Activated naive CD8-positive, alpha-beta T cell treated with anti-CD3 and anti-CD28 coated beads, Interleukin-2, amount 10 ng/mL, durations not matched to agents 7 days and 5 days (primary cell): ENCODE measurements at regions of chr12 and their contacts with region 1.

Region 1: GRCh38 chr12:7959701-7960121 is 23.7 kb upstream of the SLC2A3 start:
- DNase-seq: peak; percentile 56
- ATAC-seq: peak; percentile 65
- H3K4me3 Mint-ChIP-seq: peak overlapping the region; percentile 97
- H3K27ac Mint-ChIP-seq: peak overlapping the region; percentile 94
- H3K4me1 Mint-ChIP-seq: peaks cover 41% of the 10 kb centered on the region
- H3K27me3 Mint-ChIP-seq: no peaks in the 10 kb centered on the region

Region 2: DNA sequence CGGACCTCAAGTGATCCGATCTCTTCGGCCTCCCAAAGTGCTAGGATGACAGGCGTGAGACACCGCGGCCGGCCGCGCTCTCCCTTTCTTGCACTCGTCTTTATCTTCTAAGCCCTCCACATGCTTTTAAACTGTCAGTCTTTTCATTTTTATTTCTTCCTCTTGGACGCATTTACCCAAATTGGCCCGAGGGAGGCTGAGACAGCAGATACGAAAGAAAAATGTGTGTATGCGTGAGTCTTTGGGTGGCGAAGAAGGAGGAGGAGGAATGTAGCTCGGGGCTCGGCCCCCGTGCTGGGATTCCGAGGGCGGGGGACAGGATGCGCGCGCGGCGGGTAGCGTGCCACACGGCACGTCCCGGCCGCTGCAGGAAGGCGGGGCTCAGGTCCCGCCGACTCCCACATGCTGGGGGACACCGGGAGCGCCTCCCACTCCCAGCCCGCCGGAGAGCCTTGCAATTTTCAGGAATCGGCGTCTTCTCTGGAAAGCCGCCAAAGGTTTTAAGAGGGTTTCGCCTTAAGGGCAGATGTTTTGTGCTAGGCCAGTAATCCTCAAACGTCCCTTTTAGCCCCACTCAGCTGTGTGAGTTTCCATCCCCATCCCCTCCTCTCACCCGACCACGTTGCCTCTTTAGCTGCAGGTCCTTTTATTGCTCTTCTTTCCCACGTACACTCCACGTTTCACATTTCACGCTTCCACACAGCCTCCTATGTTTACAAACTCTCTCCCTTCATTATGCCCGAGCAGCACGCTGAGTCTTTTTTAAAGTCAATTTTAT is 11.0 kb after region 1 on chr12:
- POLR2A ChIA-PET with region 1: interaction called, 61 read pairs
- DNase-seq: peak; percentile 89
- ATAC-seq: peak; percentile 93
- H3K4me3 Mint-ChIP-seq: peak overlapping the region; percentile 79
- H3K27ac Mint-ChIP-seq: peak overlapping the region; percentile 93
- H3K4me1 Mint-ChIP-seq: peaks cover 30% of the 10 kb centered on the region
- H3K27me3 Mint-ChIP-seq: no peaks in the 10 kb centered on the region

Region 3: GRCh38 chr12:7989827-7990551 is 30.3 kb after region 1 on chr12:
- POLR2A ChIA-PET with region 1: interaction called, 22 read pairs
- DNase-seq: peak; percentile 64
- ATAC-seq: peak; percentile 96
- H3K4me3 Mint-ChIP-seq: peak overlapping the region; percentile 78
- H3K27ac Mint-ChIP-seq: peak overlapping the region; percentile 92
- H3K4me1 Mint-ChIP-seq: peaks cover 29% of the 10 kb centered on the region
- H3K27me3 Mint-ChIP-seq: no peaks in the 10 kb centered on the region

Region 4: DNA sequence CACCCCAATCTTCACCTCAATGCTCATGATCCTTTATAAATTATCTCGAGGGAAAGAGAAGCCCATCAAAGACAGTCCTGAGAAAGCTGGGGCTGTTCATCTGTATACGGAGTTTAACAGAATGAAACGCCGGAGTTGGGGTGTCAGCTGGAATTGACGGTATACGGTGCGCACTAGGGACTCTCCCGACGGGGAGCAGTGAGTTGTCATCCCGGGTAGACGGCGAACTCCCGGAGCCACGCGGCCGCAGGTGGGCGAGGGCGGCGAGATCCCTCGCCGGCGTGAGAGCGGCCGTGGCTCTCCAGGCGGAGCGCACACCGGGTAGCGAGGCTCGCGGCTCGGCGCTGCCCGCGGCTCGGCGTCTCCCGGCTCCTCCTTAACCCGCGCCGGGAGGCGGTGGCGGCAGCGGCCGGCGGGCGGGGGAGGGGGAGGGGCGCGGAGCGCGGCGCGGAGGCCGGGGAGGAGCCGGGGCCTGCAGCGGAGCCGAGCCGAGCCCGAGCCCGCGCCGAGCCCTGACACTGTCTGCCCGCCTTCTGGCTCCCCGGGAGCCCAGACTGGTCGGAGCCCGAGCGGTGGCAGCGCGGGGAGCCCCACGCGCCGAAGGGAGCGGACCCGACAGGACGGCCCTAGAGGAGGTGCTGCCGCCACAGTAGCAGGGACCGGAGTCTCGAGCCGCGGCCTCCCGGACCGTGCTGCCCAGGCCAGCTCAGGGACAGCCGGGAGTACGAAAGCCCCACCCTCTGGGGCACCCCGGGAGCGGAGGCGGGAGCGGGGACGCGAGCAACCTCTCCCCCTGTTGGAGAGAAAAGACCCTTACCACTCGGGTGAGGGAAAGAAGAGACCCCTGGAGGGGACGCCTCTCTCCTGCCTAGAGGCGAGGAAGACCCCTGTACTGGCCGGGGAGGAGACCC is 72.8 kb after region 1 on chr12 and contains the start of gene FOXJ2:
- POLR2A ChIA-PET with region 1: no interaction called
- DNase-seq: peak; percentile 85
- ATAC-seq: peak; percentile 92
- H3K4me3 Mint-ChIP-seq: peak within 1 kb of the TSS; percentile 86
- H3K27ac Mint-ChIP-seq: peak within 1 kb of the TSS; percentile 83
- H3K4me1 Mint-ChIP-seq: peaks cover 37% of the 10 kb centered on the region
- H3K27me3 Mint-ChIP-seq: peaks cover 3% of the 10 kb centered on the region
- total RNA-seq, gene FOXJ2: 26.4 to 26.9 TPM

Region 5: DNA sequence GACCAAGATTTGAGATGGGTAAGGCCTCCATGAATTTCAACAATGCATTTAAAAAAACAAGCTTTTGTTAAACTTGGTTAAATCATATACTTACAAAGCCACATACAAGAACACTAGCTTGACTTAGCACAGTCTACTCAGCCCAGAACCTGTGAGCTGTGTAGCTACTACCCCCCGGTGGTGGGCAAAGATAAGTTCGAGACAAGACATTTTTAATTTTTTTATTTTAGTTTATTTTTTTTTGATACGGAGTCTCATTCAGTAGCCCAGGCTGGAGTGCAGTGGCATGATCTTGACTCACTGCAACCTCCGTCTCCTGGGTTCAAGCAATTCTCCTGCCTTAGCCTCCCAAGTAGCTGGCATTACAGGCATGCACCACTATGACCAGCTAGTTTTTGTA is 118.7 kb after region 1 on chr12:
- POLR2A ChIA-PET with region 1: no interaction called
- DNase-seq: no peak
- ATAC-seq: peak; percentile 19
- H3K4me3 Mint-ChIP-seq: no peak overlapping the region
- H3K27ac Mint-ChIP-seq: no peak overlapping the region
- H3K4me1 Mint-ChIP-seq: peaks cover 28% of the 10 kb centered on the region
- H3K27me3 Mint-ChIP-seq: no peaks in the 10 kb centered on the region

Region 6: DNA sequence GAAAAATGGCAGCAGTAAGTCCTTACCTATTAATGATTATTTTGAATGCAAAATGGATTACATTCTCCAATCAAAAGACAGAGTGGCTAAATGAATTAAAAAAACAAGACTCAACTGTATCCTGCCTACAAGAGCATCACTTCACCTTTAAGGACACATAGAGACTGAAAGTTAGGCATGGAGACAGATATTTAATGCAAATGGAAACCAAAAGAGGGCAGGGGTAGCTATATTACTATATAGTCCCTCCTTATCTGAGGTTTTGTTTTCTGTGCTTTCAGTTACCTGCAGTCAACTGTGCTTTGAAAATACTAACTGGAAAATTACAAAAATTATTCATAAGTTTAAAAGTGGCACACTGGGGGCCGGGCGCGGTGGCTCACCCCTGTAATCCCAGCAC is 139.5 kb after region 1 on chr12:
- POLR2A ChIA-PET with region 1: no interaction called
- DNase-seq: no peak
- ATAC-seq: no peak
- H3K4me3 Mint-ChIP-seq: no peak overlapping the region
- H3K27ac Mint-ChIP-seq: peak overlapping the region; percentile 52
- H3K4me1 Mint-ChIP-seq: peaks cover 8% of the 10 kb centered on the region
- H3K27me3 Mint-ChIP-seq: no peaks in the 10 kb centered on the region